ENCODE measurements at regions of chr9 and their contacts with region 1.

Region 1: GRCh38 chr9:21506626-21507484 is 24.7 kb upstream of the IFNE start:
- DNase-seq: no peak
- H3K4me3 ChIP-seq: no peak overlapping the region
- H3K27ac ChIP-seq: no peak overlapping the region
- H3K4me1 ChIP-seq: no peaks in the 10 kb centered on the region
- H3K27me3 ChIP-seq: no peaks in the 10 kb centered on the region
- CTCF ChIP-seq: no peak
- EP300 ChIP-seq: no peak
- POLR2A ChIP-seq: no peak

Region 2: GRCh38 chr9:21455320-21455719 is 51.5 kb before region 1 on chr9:
- intact Hi-C with region 1: no loop called
- DNase-seq: no peak
- H3K4me3 ChIP-seq: no peak overlapping the region
- H3K27ac ChIP-seq: no peak overlapping the region
- H3K4me1 ChIP-seq: no peaks in the 10 kb centered on the region
- H3K27me3 ChIP-seq: no peaks in the 10 kb centered on the region
- CTCF ChIP-seq: no peak
- EP300 ChIP-seq: no peak
- POLR2A ChIP-seq: no peak

Region 3: GRCh38 chr9:21527579-21527978 is 20.7 kb after region 1 on chr9:
- intact Hi-C with region 1: no loop called
- DNase-seq: no peak
- H3K4me3 ChIP-seq: no peak overlapping the region
- H3K27ac ChIP-seq: no peak overlapping the region
- H3K4me1 ChIP-seq: no peaks in the 10 kb centered on the region
- H3K27me3 ChIP-seq: no peaks in the 10 kb centered on the region
- CTCF ChIP-seq: no peak
- EP300 ChIP-seq: no peak
- POLR2A ChIP-seq: no peak

Region 4: DNA sequence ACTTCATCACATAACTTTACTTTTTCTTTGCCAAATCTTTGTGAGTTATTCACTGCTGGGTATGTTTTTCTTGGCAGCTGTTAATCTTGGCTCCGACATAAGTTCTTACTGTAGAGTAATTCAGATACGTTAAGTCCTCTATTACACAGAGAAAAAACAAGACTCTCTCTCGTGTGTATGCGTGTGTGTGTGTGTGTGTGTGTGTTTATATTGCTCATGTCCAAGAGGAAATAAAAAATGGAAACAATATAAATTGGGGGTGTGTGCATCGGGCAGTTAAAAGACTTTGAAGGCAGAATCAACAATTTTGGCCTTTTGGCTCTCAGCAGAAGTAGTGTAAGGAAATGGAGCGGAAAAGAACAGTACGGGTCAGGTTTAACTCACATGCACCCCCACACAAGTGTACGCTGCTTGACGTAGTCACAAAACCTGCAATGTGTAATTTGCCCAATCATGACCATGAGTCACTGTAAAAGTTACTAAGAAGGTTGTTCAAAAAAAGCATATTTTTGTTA is 42.5 kb after region 1 on chr9:
- intact Hi-C with region 1: loop called in 1 of 4 experiments (anchors 2 kb)
- DNase-seq: peak in 1 of 5 donors; percentile 12
- H3K4me3 ChIP-seq: no peak overlapping the region
- H3K27ac ChIP-seq: no peak overlapping the region
- H3K4me1 ChIP-seq: peaks cover 1% of the 10 kb centered on the region
- H3K27me3 ChIP-seq: no peaks in the 10 kb centered on the region
- CTCF ChIP-seq: no peak
- EP300 ChIP-seq: no peak
- POLR2A ChIP-seq: no peak

Region 5: GRCh38 chr9:21656776-21657674 is 150.2 kb after region 1 on chr9:
- intact Hi-C with region 1: no loop called
- DNase-seq: no peak
- H3K4me3 ChIP-seq: no peak overlapping the region
- H3K27ac ChIP-seq: no peak overlapping the region
- H3K4me1 ChIP-seq: peaks cover 1% of the 10 kb centered on the region
- H3K27me3 ChIP-seq: no peaks in the 10 kb centered on the region
- CTCF ChIP-seq: no peak
- EP300 ChIP-seq: no peak
- POLR2A ChIP-seq: no peak

Region 6: DNA sequence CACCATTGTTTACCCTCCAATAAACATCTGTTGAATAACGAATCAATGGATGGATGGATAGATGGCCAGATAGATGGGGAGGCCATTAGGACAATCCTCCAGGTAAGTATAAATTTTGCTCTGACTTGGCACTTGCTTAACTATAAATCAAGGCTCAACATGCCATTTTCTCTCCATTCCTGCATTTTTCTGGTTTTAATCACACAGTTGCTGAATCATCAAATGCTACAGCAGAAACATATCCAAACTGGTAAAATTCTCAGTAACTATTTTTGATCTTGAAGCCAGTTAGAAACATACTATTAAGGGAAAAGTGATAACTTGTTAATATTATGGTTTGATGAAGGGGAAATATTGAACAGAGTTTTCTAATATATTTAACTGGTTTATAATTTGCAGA is 224.0 kb after region 1 on chr9:
- intact Hi-C with region 1: loop called in 1 of 4 experiments (anchors 2 kb)
- DNase-seq: no peak
- H3K4me3 ChIP-seq: no peak overlapping the region
- H3K27ac ChIP-seq: no peak overlapping the region
- H3K4me1 ChIP-seq: no peaks in the 10 kb centered on the region
- H3K27me3 ChIP-seq: no peaks in the 10 kb centered on the region
- CTCF ChIP-seq: no peak
- EP300 ChIP-seq: no peak
- POLR2A ChIP-seq: no peak